GM13976 (cell line): ENCODE measurements at regions of chr15 and their contacts with region 1.

Region 1: GRCh38 chr15:85707519-85708338 is 87.0 kb downstream of the KLHL25 start:
- DNase-seq: no peak
- CTCF ChIP-seq: no peak

Region 2: GRCh38 chr15:85318048-85318731 is 389.5 kb before region 1 on chr15:
- in situ Hi-C with region 1: loop called (anchors 25 kb)
- DNase-seq: peak; percentile 71
- CTCF ChIP-seq: peak; percentile 4

Region 3: GRCh38 chr15:85407804-85408746 is 299.7 kb before region 1 on chr15:
- in situ Hi-C with region 1: no loop called
- DNase-seq: peak; percentile 52
- CTCF ChIP-seq: no peak